Activated CD4-positive, alpha-beta T cell treated with anti-CD3 and anti-CD28 coated beads for 36 hours (primary cell): ENCODE measurements at regions of chr19 and their contacts with region 1.

Region 1: GRCh38 chr19:7394731-7395359 is 46.1 kb downstream of the ARHGEF18 start:
- DNase-seq: peak; percentile 94
- ATAC-seq: peak; percentile 86
- H3K4me3 Mint-ChIP-seq: peak overlapping the region; percentile 83
- H3K27ac Mint-ChIP-seq: peak overlapping the region; percentile 78
- H3K4me1 Mint-ChIP-seq: peaks cover 36% of the 10 kb centered on the region
- H3K27me3 Mint-ChIP-seq: no peaks in the 10 kb centered on the region

Region 2: GRCh38 chr19:7109678-7110289 is 285.1 kb before region 1 on chr19:
- CTCF ChIA-PET with region 1: no interaction called
- POLR2A ChIA-PET with region 1: no interaction called
- intact Hi-C with region 1: no loop called
- DNase-seq: no peak
- ATAC-seq: no peak
- H3K4me3 Mint-ChIP-seq: no peak overlapping the region
- H3K27ac Mint-ChIP-seq: no peak overlapping the region
- H3K4me1 Mint-ChIP-seq: no peaks in the 10 kb centered on the region
- H3K27me3 Mint-ChIP-seq: no peaks in the 10 kb centered on the region

Region 3: DNA sequence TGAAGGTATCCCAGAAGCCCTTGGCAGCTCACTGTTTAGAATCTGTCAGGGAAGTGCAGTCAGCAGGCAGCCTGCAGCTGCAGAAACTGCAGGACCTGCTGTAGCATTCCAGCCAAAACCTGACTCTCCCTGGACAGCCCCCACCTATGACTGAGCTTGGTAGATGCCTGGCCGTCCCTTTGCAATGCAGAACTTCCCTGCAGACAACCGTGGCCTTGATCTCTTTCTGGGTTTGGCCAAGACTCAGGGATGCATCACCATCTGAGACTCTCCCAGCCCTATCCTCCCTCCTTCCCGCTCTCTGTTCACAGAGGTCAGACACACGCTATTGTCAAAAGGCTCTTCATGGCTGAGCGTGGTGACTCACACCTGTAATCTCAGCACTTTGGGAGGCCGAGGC is 225.9 kb before region 1 on chr19:
- CTCF ChIA-PET with region 1: no interaction called
- POLR2A ChIA-PET with region 1: no interaction called
- intact Hi-C with region 1: no loop called
- DNase-seq: no peak
- ATAC-seq: no peak
- H3K4me3 Mint-ChIP-seq: no peak overlapping the region
- H3K27ac Mint-ChIP-seq: no peak overlapping the region
- H3K4me1 Mint-ChIP-seq: no peaks in the 10 kb centered on the region
- H3K27me3 Mint-ChIP-seq: no peaks in the 10 kb centered on the region

Region 4: GRCh38 chr19:7629347-7630054 is 234.7 kb after region 1 on chr19 and contains the starts of genes PET100 and XAB2:
- CTCF ChIA-PET with region 1: no interaction called
- POLR2A ChIA-PET with region 1: no interaction called
- intact Hi-C with region 1: loop called in 1 of 2 experiments (anchors 2 kb)
- DNase-seq: peak; percentile 97
- ATAC-seq: peak; percentile 99
- H3K4me3 Mint-ChIP-seq: peak within 1 kb of the TSS; percentile 88
- H3K27ac Mint-ChIP-seq: peak within 1 kb of the TSS; percentile 97
- H3K4me1 Mint-ChIP-seq: peaks cover 32% of the 10 kb centered on the region
- H3K27me3 Mint-ChIP-seq: no peaks in the 10 kb centered on the region
- total RNA-seq, gene PET100: 45.1 to 99.4 TPM
- total RNA-seq, gene XAB2: 45.9 to 48.3 TPM